GM10248 (cell line): ENCODE measurements at regions of chr2 and their contacts with region 1.

Region 1: GRCh38 chr2:68088940-68089339 is 26.1 kb upstream of the C1D start:
- DNase-seq: no peak
- CTCF ChIP-seq: no peak

Region 2: DNA sequence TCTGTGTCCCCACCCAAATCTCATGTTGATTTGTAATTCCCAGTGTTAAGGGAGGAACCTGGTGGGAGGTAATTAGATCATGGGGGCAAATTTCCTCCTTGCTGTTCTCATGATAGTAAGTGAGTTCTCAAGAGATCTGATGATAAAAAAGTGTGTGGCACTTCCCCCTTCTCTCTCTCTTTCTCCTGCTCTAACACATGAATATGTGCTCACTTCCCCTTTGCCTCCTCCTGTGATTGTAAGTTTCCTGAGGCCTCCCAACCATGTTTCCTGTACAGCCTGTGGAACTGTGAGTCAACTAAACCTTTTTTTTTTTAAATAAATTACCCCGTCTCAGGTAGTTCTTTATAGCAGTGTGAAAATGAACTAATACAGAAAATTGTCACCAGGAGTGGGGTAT is 1274.0 kb before region 1 on chr2:
- CTCF ChIA-PET with region 1: no interaction called
- POLR2A ChIA-PET with region 1: interaction called, 11 read pairs
- DNase-seq: no peak
- CTCF ChIP-seq: no peak

Region 3: GRCh38 chr2:68103030-68103708 is 14.2 kb after region 1 on chr2:
- CTCF ChIA-PET with region 1: interaction called, 10 read pairs
- POLR2A ChIA-PET with region 1: no interaction called
- DNase-seq: no peak
- CTCF ChIP-seq: no peak

Region 4: DNA sequence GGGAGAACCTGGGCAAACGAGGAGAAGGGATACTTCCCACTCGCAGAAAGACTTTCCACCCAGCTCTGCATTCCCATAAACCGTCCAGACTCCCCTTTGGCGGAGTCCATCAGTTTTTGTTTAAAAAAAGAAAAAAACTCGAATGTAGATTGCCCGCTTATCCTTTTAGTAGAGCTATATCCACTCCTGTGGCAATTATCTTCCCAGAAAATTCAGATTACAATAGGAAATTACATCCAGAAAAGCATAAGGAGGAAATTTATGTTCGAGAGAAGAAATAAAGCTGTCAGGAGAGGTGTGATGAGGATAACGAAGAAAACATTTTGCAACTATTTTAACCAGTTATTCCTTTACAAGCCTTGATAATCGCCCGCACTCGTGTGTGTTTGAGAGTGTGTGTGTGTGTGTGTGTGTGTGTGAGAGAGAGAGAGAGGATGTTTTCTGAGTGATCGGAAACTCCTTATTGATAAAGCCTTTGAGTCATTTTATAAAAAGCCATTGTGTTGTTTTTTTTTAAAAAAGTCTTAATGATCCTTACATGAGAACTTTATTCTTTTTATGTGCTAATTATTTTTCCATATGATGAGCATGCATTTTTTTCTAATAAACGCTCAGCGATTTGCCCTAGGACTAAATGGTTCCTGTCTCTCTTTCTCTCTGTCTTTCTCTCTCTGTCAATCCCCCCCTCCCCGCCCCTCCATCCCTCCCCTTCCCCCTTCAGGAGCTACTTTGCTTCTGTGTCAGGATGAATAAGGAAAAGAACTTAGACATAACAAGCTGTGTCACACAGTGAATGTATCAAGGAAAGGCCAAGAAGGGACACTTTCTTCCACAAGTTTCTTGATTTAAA is 164.5 kb after region 1 on chr2:
- CTCF ChIA-PET with region 1: no interaction called
- POLR2A ChIA-PET with region 1: no interaction called
- DNase-seq: no peak
- CTCF ChIP-seq: no peak

Region 5: DNA sequence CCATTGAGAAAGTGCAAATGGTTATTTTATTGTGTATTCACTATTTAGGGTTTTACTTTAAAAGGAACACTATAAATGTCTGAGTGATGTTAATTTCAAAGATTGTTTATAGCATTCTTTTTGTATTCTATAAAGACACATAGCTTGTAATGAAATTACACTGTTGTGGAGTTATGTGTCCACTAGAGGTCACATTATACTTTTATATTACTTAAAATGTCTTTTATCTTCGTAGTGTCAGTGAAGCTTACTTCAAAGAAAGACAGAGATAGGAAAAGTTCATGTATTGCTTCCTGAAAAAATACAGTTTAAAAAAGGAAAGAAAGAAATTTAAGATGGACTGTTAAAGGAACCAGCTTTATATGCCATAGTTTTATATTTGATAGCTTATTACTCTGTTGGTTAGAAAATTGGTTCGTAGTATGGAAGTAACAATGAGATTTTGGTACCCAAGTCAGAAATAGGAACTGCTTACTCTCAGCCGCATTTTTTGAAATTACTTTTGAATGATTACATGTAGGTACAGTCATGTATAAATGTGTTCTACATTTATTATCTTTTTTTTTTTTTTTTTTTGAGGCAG is 398.9 kb after region 1 on chr2:
- CTCF ChIA-PET with region 1: no interaction called
- POLR2A ChIA-PET with region 1: no interaction called
- DNase-seq: peak; percentile 38
- CTCF ChIP-seq: peak; percentile 33